ENCODE measurements at regions of chr6 and their contacts with region 1.

Region 1: DNA sequence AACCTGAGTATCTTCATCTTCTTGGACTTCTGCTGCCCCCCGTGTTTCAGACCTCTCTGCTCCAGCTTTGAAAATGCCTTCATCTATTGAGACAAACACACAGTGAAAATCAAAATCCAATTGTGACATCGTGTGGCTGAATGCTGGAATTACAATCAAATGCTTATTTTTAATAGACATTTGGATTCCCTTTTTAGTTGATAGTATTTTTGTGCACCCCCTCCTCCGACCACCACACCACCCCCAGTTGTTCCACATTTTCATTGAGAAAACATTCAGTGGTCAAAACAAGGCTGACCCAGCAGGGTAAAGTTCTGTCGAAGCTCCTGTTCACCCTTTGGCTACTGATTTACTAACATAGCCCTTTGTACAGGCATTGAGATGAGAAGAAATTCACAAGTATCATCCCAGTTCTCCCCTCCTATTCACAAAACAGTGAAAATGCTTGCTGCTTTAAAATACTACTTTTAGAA is 79.0 kb downstream of the NRSN1 start:
- DNase-seq: no peak
- ATAC-seq: no peak
- H3K4me3 ChIP-seq: no peak overlapping the region
- H3K27ac ChIP-seq: no peak overlapping the region
- H3K4me1 ChIP-seq: no peaks in the 10 kb centered on the region
- H3K27me3 ChIP-seq: no peaks in the 10 kb centered on the region
- CTCF ChIP-seq: peak; percentile 14 to 54 (median 34)
- POLR2A ChIP-seq: no peak

Region 2: DNA sequence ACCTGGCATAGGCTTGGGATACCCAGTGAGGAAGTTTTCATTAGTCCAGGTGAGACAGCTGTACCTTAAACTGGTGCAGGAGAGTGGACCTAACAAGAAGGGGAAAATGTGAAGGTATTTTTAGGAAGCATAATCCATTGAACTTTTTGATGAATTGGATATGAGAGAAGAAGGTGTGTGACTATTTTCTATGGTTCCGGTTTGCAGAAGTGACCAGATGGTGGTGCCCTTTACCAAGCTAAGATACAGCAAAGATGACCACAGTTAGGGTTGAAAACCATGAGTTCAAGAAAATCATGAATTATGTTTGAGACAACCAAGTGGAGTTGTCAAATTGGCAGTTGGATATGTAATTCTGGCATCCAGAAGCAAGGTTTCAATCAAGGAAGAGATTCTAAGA is 141.0 kb before region 1 on chr6:
- in situ Hi-C with region 1: loop called in 1 of 4 experiments (anchors 5 kb)
- intact Hi-C with region 1: loop called (anchors 5 kb)
- DNase-seq: no peak
- ATAC-seq: no peak
- H3K4me3 ChIP-seq: no peak overlapping the region
- H3K27ac ChIP-seq: no peak overlapping the region
- H3K4me1 ChIP-seq: no peaks in the 10 kb centered on the region
- H3K27me3 ChIP-seq: no peaks in the 10 kb centered on the region
- CTCF ChIP-seq: no peak
- POLR2A ChIP-seq: no peak

Measured in gastrocnemius medialis (tissue), 4 donors.